Prostate gland (tissue), 2 donors: ENCODE measurements at regions of chr3 and their contacts with region 1.

Region 1: GRCh38 chr3:58177747-58178527 is 32.8 kb downstream of the DNASE1L3 start:
- DNase-seq: peak; percentile 84
- H3K4me3 ChIP-seq: peak overlapping the region; percentile 15 to 25
- H3K27ac ChIP-seq: no peak overlapping the region
- H3K4me1 ChIP-seq: peaks cover 6% of the 10 kb centered on the region
- H3K27me3 ChIP-seq: no peaks in the 10 kb centered on the region
- CTCF ChIP-seq: peak; percentile 81 to 94 (median 88)
- POLR2A ChIP-seq: no peak

Region 2: DNA sequence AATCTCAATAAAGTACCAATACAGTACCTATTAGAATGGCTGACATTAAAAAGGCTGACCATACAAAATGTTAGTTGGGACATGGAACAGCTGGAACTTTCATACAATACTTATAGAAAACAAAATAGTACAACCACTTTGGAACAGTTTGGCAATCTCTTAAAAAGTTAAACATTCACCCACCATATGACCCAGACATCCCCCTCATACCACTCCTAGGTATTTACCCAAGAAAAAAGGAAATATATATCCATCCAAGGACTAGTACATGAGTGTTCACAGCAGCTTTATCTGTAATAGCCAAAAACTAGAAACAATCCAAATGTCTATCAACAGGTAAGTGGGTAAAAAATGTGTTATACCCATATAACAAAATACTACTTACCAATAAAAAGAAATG is 555.6 kb before region 1 on chr3:
- intact Hi-C with region 1: no loop called
- DNase-seq: no peak
- H3K4me3 ChIP-seq: no peak overlapping the region
- H3K27ac ChIP-seq: no peak overlapping the region
- H3K4me1 ChIP-seq: no peaks in the 10 kb centered on the region
- H3K27me3 ChIP-seq: no peaks in the 10 kb centered on the region
- CTCF ChIP-seq: no peak
- POLR2A ChIP-seq: no peak

Region 3: DNA sequence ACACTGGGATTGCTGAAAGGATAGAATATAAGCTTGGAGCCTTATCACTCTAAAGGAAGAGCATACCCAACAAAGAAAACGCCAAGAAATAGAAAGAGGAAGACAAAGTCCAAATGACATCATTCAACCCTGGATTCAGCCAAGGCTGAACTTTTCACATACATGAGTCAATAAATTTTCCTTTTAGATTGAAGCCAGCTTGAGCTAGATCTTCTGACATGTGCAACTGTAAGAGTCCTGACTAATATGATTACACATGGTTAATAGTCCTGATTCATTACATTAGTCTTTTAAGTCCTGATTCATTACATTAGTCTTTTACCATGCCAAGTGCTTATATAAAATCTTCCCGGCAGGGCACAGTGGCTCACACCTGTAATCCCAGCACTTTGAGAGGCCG is 471.5 kb before region 1 on chr3:
- intact Hi-C with region 1: no loop called
- DNase-seq: no peak
- H3K4me3 ChIP-seq: no peak overlapping the region
- H3K27ac ChIP-seq: no peak overlapping the region
- H3K4me1 ChIP-seq: no peaks in the 10 kb centered on the region
- H3K27me3 ChIP-seq: no peaks in the 10 kb centered on the region
- CTCF ChIP-seq: no peak
- POLR2A ChIP-seq: no peak

Region 4: GRCh38 chr3:57864853-57865252 is 313.1 kb before region 1 on chr3:
- intact Hi-C with region 1: loop called (anchors 10 kb)
- DNase-seq: no peak
- H3K4me3 ChIP-seq: no peak overlapping the region
- H3K27ac ChIP-seq: no peak overlapping the region
- H3K4me1 ChIP-seq: no peaks in the 10 kb centered on the region
- H3K27me3 ChIP-seq: no peaks in the 10 kb centered on the region
- CTCF ChIP-seq: peak; percentile 28 to 75 (median 56)
- POLR2A ChIP-seq: no peak

Region 5: DNA sequence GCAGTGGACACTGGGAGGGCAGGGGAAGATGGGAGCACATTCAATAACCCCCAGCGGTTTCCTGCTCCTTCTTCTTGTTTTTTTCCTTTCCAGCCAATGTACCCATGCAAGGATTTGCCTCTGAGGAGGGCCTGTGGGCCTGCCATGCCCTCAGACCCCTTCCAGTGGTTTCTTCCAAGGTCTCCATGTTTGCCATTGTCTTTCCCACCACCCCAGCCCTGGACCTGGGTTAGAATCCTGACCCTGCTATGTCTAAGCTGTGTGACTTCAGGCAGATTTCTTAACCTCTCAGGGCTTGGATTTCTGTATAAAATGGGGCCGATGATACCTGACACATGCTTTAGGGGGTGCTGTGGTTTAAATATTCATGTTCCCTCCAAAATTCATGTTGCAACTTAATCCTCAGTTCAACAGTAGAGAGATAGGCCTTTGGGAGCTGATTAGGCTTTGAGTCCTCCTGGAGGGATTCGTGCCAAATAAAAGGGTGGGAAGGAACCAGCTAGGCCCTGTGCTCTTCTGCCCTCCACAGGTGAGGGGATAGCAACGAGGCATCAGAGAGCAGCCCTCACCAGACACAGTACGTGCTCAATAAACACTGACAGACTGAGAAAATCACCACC is 216.0 kb before region 1 on chr3:
- intact Hi-C with region 1: loop called (anchors 5 kb)
- DNase-seq: no peak
- H3K4me3 ChIP-seq: no peak overlapping the region
- H3K27ac ChIP-seq: no peak overlapping the region
- H3K4me1 ChIP-seq: no peaks in the 10 kb centered on the region
- H3K27me3 ChIP-seq: no peaks in the 10 kb centered on the region
- CTCF ChIP-seq: peak in 3 of 4 experiments; percentile 11 to 51 (median 28)
- POLR2A ChIP-seq: no peak

Region 6: GRCh38 chr3:58008140-58009025 is 169.6 kb before region 1 on chr3 and contains the start of gene FLNB:
- intact Hi-C with region 1: loop called (anchors 2 kb)
- DNase-seq: peak; percentile 64
- H3K4me3 ChIP-seq: peak within 1 kb of the TSS; percentile 75 to 88
- H3K27ac ChIP-seq: peak within 1 kb of the TSS; percentile 84 to 93
- H3K4me1 ChIP-seq: peaks cover 19% of the 10 kb centered on the region
- H3K27me3 ChIP-seq: no peaks in the 10 kb centered on the region
- CTCF ChIP-seq: peak; percentile 81 to 94 (median 89)
- POLR2A ChIP-seq: peak; percentile 74
- total RNA-seq, gene FLNB: 331 to 408 TPM

Region 7: DNA sequence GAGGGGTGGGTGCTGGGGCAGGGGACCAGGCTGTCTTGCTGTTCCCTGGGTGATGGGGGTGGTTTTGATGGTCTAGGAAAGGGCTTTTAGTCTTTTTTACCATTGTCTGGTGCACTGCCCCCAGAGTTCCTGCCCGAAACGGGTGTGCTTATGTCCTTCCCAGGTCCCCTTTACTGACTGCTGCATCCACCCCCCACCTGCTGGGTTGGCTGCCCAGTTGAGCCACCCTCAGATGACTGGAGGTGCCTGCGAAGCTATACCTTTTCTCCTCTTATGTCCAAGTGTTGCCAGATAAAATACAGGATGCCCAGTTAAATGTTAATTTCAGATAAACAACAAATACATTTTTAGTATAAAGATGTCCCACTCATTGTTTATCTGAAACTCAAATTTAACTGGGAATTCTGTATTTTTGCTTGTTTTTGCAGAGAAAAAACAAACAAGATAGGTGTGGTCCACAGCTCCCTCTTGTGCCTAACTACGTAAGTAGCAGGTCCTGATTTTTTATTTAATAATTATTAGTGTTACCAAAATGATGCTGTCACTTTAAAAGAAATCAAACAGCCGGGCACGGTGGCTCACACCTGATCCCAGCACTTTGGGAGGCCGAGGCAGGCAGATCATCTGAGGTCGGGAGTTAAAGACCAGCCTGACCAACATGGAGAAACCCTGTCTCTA is 122.0 kb after region 1 on chr3:
- intact Hi-C with region 1: loop called (anchors 5 kb)
- DNase-seq: no peak
- H3K4me3 ChIP-seq: no peak overlapping the region
- H3K27ac ChIP-seq: no peak overlapping the region
- H3K4me1 ChIP-seq: no peaks in the 10 kb centered on the region
- H3K27me3 ChIP-seq: no peaks in the 10 kb centered on the region
- CTCF ChIP-seq: peak in 3 of 4 experiments; percentile 51 to 73 (median 71)
- POLR2A ChIP-seq: no peak